ENCODE measurements at regions of chrX and their contacts with region 1.

Region 1: DNA sequence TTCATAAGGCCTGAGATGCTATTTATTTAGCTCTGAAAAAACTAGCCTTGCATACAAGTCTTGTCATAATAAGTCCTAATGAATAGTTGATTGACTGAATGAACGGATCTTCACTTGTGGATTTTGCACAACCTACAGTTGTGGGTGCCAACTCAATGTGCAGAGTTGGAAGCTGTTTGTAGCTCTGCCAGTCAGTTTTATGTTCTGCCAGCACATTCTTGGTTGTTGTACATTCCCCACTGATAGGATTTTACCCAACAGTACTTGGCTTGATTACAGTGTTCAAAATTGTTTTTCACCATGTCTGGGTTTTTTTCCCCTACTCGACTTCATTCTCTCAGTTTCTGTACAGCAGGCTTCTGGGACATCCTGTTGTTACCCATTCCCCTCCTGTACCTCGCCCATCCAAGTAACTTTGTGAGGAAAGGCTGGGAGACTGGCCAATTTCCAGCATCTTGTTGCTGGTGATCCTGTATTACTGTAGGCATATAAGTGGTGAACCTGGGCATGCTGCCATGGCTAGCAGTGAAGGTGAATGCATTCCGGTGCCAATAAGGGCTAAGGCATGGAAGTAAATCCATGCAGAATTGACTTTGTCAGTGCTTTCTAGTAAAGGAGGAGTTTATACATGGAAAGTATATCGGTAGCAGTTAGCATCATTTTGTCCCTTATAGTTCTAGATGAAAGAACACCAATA is 22.8 kb downstream of the IL1RAPL1 start:
- DNase-seq: peak; percentile 49 to 72 (median 56)
- ATAC-seq: peak; percentile 73 to 78 (median 78)
- H3K4me3 ChIP-seq: no peak overlapping the region
- H3K27ac ChIP-seq: peak overlapping the region in 7 of 12 donors; percentile 10 to 71 (median 37)
- H3K4me1 ChIP-seq: peaks cover 0 to 6% (median 0%) of the 10 kb centered on the region in 12 donors
- H3K27me3 ChIP-seq: no peaks in the 10 kb centered on the region
- CTCF ChIP-seq: no peak
- POLR2A ChIP-seq: no peak

Region 2: DNA sequence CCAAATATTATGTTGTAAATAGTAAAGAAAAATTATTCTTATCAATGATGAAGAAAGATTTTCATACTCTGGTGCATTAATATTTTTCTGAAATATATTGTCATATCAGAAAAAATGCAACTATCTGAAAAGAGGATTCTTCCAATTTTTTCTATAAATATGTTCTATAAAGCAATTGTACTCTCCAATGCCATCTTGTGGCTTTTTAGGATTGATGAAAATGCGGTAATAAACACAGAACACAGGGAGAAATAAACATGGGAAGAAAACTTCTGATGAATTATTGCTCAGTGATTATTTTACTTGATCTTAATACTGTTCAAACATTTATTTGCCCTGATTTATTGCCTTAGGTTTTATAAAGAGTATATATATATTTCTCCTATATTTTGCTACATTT is 192.6 kb after region 1 on chrX:
- intact Hi-C with region 1: no loop called
- DNase-seq: no peak
- ATAC-seq: no peak
- H3K4me3 ChIP-seq: no peak overlapping the region
- H3K27ac ChIP-seq: no peak overlapping the region
- H3K4me1 ChIP-seq: no peaks in the 10 kb centered on the region
- H3K27me3 ChIP-seq: no peaks in the 10 kb centered on the region
- CTCF ChIP-seq: peak in 1 of 12 donors; percentile 7
- POLR2A ChIP-seq: no peak

Region 3: GRCh38 chrX:28847423-28847822 is 237.4 kb after region 1 on chrX:
- intact Hi-C with region 1: loop called in 4 of 10 experiments (anchors 5 to 10 kb)
- DNase-seq: peak in 4 of 5 donors; percentile 15 to 85 (median 29)
- ATAC-seq: peak; percentile 72 to 92 (median 83)
- H3K4me3 ChIP-seq: peak overlapping the region in 1 of 12 donors; percentile 25
- H3K27ac ChIP-seq: peak overlapping the region in 4 of 12 donors; percentile 2 to 41 (median 20)
- H3K4me1 ChIP-seq: peaks cover 0 to 2% (median 0%) of the 10 kb centered on the region in 12 donors
- H3K27me3 ChIP-seq: no peaks in the 10 kb centered on the region
- CTCF ChIP-seq: no peak
- POLR2A ChIP-seq: no peak

Measured in heart left ventricle (tissue), 16 donors.